ENCODE measurements at regions of chr1 and their contacts with region 1.

Region 1: DNA sequence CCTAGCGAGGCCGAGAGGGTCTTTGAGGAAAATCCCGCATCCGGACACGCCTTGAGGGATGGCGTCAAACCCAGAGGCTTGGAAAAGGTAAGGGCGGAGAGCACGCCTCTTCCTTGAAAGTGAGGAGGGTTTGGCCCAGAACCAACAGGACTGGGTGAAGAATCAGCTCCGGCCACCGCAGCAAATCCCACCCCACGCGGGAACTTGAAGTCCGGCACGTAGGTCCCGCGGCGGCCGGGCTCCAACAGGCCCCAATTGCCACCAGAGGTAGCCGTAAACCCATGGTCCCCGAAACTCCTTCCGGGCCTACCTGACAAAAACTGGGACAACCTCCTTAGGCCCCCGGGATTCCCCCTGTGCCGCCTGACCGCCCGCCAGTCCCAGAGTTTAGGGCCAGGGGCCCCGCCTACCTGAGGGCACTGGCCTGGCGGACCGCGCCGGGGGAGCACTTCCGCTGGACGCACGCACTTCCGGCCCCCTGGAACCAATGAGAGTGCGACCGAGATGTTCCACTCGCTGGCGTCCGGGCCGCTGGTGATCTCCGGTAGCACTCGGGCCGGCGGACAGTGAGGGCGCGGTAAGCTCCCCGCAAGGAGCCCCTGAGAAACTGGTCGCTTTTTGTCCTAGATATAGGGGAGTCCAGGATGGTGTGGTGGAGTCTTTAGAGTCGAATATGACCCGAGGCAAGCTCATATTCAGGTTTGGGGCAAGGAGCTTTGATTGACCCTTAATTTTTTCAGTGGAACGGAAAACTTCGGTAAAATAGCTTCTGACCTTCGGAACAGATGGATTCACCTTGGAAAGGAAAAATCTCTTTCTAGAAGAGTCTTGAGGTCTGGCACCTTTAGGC is at the starts of genes LZIC and NMNAT1:
- DNase-seq: peak; percentile 89 to 93
- ATAC-seq: peak; percentile 97 to 98 (median 98)
- H3K4me3 ChIP-seq: peak within 1 kb of the TSS; percentile 70
- H3K4me3 Mint-ChIP-seq: peak within 1 kb of the TSS; percentile 98
- H3K27ac ChIP-seq: peak within 1 kb of the TSS; percentile 88
- H3K27ac Mint-ChIP-seq: peak within 1 kb of the TSS; percentile 95 to 98
- H3K4me1 ChIP-seq: peaks cover 20% of the 10 kb centered on the region
- H3K4me1 Mint-ChIP-seq: peaks cover 13% of the 10 kb centered on the region in 2 donors
- H3K27me3 ChIP-seq: no peaks in the 10 kb centered on the region
- H3K27me3 Mint-ChIP-seq: no peaks in the 10 kb centered on the region
- CTCF ChIP-seq: no peak
- total RNA-seq, gene LZIC: 19.5 to 21.9 (median 21.7) TPM
- total RNA-seq, gene NMNAT1: 2.6 to 4.7 (median 2.9) TPM

Region 2: GRCh38 chr1:9874959-9875635 is 68.1 kb before region 1 on chr1:
- intact Hi-C with region 1: loop called (anchors 1 kb)
- DNase-seq: peak; percentile 63 to 89
- ATAC-seq: peak; percentile 82 to 99 (median 98)
- H3K4me3 ChIP-seq: no peak overlapping the region
- H3K4me3 Mint-ChIP-seq: no peak overlapping the region
- H3K27ac ChIP-seq: no peak overlapping the region
- H3K27ac Mint-ChIP-seq: no peak overlapping the region
- H3K4me1 ChIP-seq: peaks cover 8% of the 10 kb centered on the region
- H3K4me1 Mint-ChIP-seq: peaks cover 10 to 12% of the 10 kb centered on the region in 2 donors
- H3K27me3 ChIP-seq: no peaks in the 10 kb centered on the region
- H3K27me3 Mint-ChIP-seq: no peaks in the 10 kb centered on the region
- CTCF ChIP-seq: peak; percentile 93

Region 3: DNA sequence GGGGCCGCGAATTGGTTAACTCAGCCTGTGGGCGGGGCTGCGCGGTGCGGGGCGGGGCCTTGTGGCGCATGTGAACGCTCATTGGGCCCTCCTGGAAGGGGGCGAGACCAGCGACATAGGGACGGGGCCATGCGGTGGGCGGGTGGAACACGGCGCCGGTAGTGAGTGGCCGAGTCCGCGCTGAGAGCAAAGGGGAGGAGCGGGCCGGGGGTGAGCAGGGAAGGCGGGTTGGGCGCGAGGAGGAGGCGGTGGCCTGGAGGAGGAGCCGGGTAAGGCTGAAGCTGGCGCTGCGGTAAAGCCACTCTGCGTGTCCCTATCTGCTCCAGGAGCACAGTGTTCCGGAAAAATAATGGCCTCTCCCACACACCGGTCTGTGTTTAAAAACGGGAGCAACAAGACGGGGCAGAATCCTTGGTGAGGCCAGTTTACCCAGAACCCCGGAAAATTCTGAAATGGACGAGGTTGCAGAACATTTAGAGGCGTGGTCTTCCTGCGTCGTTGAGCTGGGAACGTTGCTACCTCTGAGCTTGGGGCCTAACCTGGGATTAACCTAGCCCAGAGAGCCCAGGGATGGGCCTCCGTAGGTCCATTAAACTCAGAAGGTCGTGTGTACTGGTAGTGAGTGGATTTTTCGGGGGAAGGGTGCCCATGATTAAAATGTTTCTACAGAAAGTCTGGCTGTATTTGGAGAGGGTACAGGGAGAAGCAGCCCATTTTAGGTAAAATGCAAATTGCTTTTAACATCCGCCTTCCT is 32.6 kb before region 1 on chr1:
- intact Hi-C with region 1: loop called (anchors 2 kb)
- DNase-seq: peak; percentile 99 to 100
- ATAC-seq: peak; percentile 86 to 97 (median 88)
- H3K4me3 ChIP-seq: peak overlapping the region; percentile 87
- H3K4me3 Mint-ChIP-seq: peak overlapping the region; percentile 92
- H3K27ac ChIP-seq: peak overlapping the region; percentile 80
- H3K27ac Mint-ChIP-seq: peak overlapping the region; percentile 91 to 93
- H3K4me1 ChIP-seq: peaks cover 22% of the 10 kb centered on the region
- H3K4me1 Mint-ChIP-seq: peaks cover 35 to 46% of the 10 kb centered on the region in 2 donors
- H3K27me3 ChIP-seq: no peaks in the 10 kb centered on the region
- H3K27me3 Mint-ChIP-seq: no peaks in the 10 kb centered on the region
- CTCF ChIP-seq: no peak

Region 4: DNA sequence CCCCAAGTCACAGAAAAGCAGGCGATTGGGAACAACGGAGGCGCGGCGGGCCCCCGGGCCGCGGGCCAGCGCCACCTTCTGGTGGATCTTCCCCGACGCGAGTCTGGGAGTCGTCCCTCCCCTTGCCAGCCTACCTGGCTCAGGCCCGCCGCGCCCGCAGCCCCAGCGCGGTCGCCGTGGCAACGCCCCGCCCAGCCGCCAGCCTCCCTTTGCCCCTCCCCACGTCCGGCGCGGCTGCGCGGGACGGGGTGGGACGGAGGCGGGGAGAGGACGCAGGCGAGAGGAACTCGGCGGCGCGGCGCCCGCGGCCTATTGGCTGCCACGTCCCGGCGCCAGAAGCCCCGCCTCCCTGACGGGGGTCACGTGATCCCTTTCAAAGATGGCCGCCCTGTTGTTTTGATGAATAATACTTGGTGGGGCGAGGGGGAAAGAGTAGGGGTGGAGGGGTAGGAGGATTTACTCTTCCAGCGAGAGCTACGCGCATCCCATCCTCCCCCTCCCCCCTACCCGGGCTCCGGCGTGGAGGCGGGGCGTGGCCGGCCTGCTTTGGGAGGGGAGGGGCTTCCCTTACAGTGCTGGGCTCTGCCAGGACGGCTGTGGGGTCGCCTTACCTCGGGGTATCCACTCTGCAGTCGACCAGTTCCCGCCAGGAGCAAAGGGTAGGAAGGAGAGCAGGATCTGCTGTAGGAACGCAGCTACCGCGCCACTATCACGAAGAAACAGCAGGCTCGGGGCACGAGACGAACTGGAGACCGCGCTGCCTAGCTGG is 89.6 kb after region 1 on chr1 and contains the start of gene UBE4B:
- intact Hi-C with region 1: loop called (anchors 2 kb)
- DNase-seq: peak; percentile 99 to 100
- ATAC-seq: peak; percentile 96 to 100 (median 96)
- H3K4me3 ChIP-seq: peak within 1 kb of the TSS; percentile 91
- H3K4me3 Mint-ChIP-seq: peak within 1 kb of the TSS; percentile 93
- H3K27ac ChIP-seq: peak within 1 kb of the TSS; percentile 88
- H3K27ac Mint-ChIP-seq: peak within 1 kb of the TSS; percentile 83 to 98
- H3K4me1 ChIP-seq: peaks cover 11% of the 10 kb centered on the region
- H3K4me1 Mint-ChIP-seq: peaks cover 24% of the 10 kb centered on the region in 2 donors
- H3K27me3 ChIP-seq: no peaks in the 10 kb centered on the region
- H3K27me3 Mint-ChIP-seq: no peaks in the 10 kb centered on the region
- CTCF ChIP-seq: peak; percentile 79
- total RNA-seq, gene UBE4B: 37.0 to 48.0 (median 41.4) TPM